ENCODE measurements at regions of chr6 and their contacts with region 1.

Region 1: DNA sequence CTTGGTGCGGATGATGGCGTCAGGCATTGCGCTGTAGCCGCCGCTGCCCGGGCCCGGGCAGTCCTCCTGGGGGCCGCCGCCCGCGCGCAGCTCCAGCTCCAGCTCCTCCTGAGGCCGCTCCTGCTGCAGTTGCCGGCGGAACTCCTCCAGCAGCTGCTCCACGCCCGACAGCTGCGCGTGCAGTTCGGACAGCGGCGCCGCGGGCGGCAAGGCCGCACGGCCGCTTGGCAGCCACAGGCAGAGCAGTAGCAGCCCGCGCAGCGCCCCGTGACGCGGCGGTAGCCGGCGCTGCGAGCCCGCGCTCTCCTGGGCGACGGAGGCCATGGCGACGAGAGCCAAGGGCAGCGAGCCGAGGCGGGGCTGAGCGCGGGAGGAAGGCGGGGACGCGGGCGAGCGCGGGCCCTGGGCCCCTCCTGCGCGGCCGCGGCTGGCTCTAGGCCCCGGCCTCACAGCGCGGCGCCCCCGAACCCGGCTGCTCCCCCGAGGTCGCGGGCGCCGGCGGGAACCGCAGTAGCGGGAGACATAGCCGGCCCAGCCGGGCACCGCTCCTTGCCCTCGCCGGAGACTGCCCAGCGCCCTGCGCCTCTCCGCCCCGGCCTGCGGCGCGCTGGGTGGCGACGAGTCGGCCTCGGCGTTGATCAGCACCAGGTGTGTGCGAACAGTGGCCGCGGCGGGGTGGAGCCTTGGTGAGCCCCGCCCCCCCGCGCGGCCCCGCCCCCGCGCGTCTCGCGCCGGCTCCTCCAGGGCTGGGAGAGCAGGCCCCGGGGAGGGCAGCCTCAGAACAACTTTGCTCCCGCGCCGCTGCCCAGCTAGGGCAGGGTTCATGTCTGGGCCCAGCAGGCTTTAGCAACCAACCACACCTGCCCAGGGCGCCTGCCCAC is at the start of gene LRP11:
- DNase-seq: peak; percentile 80
- H3K4me3 Mint-ChIP-seq: peak within 1 kb of the TSS; percentile 80
- H3K27ac Mint-ChIP-seq: no peak within 1 kb of the TSS
- H3K4me1 Mint-ChIP-seq: peaks cover 6% of the 10 kb centered on the region
- H3K27me3 Mint-ChIP-seq: peaks cover 12% of the 10 kb centered on the region
- total RNA-seq, gene LRP11: 4.6 to 4.7 TPM

Region 2: DNA sequence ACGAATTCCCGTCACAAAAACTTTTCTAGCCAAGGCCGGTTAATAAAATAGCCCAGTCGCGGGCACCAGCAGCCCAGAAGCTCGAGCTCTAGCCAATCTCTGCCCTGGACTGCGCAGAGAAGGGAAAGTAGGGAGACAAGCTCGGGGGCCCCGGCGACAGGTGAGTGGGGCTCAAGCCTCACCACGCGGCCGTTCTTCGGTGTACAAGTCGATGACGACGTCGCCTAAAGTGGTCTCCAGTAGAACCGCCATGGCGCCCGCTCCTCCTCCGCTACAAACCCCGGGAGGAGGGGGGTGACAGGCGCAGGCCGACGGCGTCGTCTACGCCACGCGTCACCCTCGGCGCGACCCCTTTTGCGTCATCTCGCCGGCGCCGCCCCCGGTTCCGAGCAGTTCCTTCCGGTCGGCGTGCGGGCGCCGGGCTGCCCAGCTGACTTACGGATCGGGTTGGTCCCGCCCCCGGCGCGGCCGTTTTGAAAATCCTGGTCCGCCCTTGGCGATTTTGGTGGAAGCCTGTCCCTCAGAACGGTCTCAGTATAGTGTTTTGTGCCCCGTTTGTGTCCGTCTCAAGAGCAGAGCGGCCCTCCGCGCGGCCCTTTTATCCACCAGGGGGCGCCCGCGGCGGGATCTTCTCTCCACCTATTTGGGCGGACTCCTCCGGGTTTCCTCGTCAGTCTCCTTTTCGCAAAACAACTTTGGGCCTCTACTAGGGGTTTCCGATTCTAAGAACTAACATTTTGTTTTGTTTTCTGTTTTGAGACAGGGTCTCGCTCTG is 318.0 kb before region 1 on chr6 and contains the start of gene PPIL4:
- CTCF ChIA-PET with region 1: no interaction called
- intact Hi-C with region 1: loop called (anchors 1 kb)
- DNase-seq: peak; percentile 97
- H3K4me3 Mint-ChIP-seq: peak within 1 kb of the TSS; percentile 96
- H3K27ac Mint-ChIP-seq: peak within 1 kb of the TSS; percentile 95
- H3K4me1 Mint-ChIP-seq: peaks cover 37% of the 10 kb centered on the region
- H3K27me3 Mint-ChIP-seq: no peaks in the 10 kb centered on the region
- total RNA-seq, gene PPIL4: 25.8 to 26.2 TPM

Region 3: DNA sequence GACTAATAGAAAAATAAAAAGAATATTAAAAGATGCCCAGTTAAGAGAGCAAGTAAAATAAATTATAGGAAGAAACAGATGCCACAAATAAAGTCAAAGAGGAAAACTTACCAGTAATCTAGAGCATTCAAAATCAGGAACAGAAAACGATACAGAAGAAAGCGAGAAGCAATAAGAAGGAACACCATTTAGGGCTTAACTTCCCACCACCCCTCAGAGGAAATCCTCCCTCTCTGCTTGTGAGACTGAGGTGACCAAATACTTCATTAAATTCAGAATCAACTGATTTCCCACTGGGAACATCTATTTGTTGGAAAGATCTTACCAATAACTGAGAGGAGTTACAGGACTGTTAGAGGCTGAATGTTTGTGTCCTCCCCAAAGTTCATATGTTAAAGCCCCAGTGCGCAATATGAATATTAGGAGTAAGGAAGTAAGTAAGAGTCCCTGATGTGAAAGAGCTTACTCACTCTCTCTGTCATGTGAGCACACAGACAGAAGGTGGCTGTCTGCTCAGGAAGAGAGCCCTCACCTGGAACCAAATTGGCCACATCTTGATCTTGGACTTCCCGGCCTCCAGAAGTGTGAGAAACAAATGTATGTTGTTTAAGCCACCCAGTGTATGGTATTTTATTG is 234.9 kb before region 1 on chr6:
- CTCF ChIA-PET with region 1: no interaction called
- intact Hi-C with region 1: no loop called
- DNase-seq: peak; percentile 17
- H3K4me3 Mint-ChIP-seq: no peak overlapping the region
- H3K27ac Mint-ChIP-seq: peak overlapping the region; percentile 19
- H3K4me1 Mint-ChIP-seq: peaks cover 8% of the 10 kb centered on the region
- H3K27me3 Mint-ChIP-seq: no peaks in the 10 kb centered on the region

Region 4: GRCh38 chr6:149723771-149724417 is 140.0 kb before region 1 on chr6:
- CTCF ChIA-PET with region 1: interaction called, 4 read pairs
- intact Hi-C with region 1: loop called (anchors 1 kb)
- DNase-seq: peak; percentile 56
- H3K4me3 Mint-ChIP-seq: no peak overlapping the region
- H3K27ac Mint-ChIP-seq: no peak overlapping the region
- H3K4me1 Mint-ChIP-seq: peaks cover 12% of the 10 kb centered on the region
- H3K27me3 Mint-ChIP-seq: no peaks in the 10 kb centered on the region

Region 5: GRCh38 chr6:149834513-149835481 is 29.1 kb before region 1 on chr6:
- CTCF ChIA-PET with region 1: interaction called, 11 read pairs
- intact Hi-C with region 1: loop called (anchors 1 kb)
- DNase-seq: peak; percentile 87
- H3K4me3 Mint-ChIP-seq: no peak overlapping the region
- H3K27ac Mint-ChIP-seq: no peak overlapping the region
- H3K4me1 Mint-ChIP-seq: peaks cover 2% of the 10 kb centered on the region
- H3K27me3 Mint-ChIP-seq: no peaks in the 10 kb centered on the region

Region 6: DNA sequence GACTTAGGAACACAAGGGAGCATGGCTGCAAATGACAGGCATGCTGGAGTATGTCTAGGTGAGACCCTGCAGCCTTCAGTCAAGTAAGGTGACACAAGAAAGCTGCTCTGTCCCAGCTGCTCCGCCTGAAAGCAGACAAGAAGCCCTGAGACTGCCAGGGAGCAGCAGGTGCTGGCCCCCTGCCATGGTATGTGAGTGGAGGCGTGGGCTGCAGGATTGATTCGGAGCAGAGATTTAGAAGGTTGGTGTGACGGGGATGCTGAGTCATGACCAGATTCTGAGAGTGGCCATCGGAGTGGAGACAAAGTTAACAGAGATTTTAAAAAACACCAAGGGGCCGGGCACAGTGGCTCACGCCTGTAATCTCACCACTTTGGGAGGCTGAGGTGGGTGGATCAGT is 17.6 kb before region 1 on chr6:
- CTCF ChIA-PET with region 1: interaction called, 12 read pairs
- intact Hi-C with region 1: no loop called
- DNase-seq: no peak
- H3K4me3 Mint-ChIP-seq: no peak overlapping the region
- H3K27ac Mint-ChIP-seq: no peak overlapping the region
- H3K4me1 Mint-ChIP-seq: peaks cover under 1% of the 10 kb centered on the region
- H3K27me3 Mint-ChIP-seq: no peaks in the 10 kb centered on the region

Region 7: DNA sequence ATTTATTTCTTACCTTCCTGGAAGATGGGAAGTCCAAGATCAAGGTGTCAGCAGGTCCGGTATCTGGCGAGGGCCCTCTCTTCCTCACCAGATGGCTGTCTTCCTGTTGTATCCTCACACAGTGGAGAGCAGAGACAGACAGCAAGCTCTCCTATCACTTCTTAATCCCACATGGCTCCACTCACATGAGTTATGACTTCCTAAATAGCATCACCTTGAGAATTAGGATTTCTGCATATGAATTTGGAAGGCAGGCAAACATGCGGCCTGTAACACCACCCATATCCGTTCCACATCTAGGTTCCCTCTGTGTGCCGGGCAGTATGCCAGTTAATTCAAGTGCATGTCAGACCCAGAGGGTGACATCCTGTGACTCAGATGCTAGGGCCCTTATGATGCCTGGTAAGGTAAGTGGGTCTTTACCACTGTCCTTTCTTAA is 31.9 kb after region 1 on chr6:
- CTCF ChIA-PET with region 1: no interaction called
- intact Hi-C with region 1: loop called (anchors 1 kb)
- DNase-seq: peak; percentile 76
- H3K4me3 Mint-ChIP-seq: no peak overlapping the region
- H3K27ac Mint-ChIP-seq: no peak overlapping the region
- H3K4me1 Mint-ChIP-seq: peaks cover 12% of the 10 kb centered on the region
- H3K27me3 Mint-ChIP-seq: peaks cover 3% of the 10 kb centered on the region

Region 8: DNA sequence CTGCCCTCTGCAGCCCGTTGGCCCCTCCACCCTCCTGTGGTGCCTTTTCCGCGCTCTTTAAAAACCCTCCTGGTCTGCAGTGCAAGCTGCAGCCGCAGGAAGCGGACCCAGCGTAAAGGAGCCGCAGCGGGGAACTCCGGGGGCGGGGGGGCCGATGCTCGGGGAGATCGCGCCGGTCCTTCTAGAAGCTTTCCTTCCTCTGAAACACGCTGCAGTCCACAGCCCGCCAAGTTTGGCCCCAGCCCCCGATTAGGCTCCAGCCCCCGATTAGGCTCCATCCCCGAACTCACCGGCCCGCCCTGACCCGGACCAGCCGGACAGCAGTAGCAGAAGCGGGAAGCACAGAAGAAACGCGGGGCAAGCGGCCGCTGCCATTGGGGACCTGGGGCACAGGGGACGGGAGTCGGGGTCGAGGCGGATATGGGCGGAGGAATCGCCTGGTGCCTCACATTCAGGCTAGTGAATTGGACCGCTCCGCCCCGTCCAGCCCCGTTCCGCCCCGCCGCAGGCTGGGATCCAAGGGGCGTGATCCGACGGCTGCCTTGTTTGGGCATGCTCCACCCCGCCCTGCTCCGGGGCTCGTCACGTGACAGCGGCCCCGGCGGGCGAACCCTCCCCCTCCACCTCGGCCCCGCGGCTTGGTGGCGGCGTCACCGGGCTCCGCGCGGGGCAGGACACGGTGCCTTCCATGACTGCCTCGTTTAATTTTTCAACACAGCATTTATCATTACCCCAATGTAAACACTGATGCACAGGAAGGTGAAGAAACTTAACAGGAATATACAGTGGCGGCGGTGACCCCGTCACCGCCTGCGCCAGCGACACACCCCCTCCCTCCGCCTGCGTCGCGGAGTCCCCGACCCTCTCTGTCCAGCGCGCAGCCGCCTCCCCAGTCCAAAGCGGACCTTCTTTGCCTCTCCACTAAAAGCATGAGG is 141.1 kb after region 1 on chr6:
- CTCF ChIA-PET with region 1: no interaction called
- intact Hi-C with region 1: loop called (anchors 5 kb)
- DNase-seq: peak; percentile 94
- H3K4me3 Mint-ChIP-seq: peak overlapping the region; percentile 86
- H3K27ac Mint-ChIP-seq: no peak overlapping the region
- H3K4me1 Mint-ChIP-seq: peaks cover 51% of the 10 kb centered on the region
- H3K27me3 Mint-ChIP-seq: peaks cover 26% of the 10 kb centered on the region

Region 9: DNA sequence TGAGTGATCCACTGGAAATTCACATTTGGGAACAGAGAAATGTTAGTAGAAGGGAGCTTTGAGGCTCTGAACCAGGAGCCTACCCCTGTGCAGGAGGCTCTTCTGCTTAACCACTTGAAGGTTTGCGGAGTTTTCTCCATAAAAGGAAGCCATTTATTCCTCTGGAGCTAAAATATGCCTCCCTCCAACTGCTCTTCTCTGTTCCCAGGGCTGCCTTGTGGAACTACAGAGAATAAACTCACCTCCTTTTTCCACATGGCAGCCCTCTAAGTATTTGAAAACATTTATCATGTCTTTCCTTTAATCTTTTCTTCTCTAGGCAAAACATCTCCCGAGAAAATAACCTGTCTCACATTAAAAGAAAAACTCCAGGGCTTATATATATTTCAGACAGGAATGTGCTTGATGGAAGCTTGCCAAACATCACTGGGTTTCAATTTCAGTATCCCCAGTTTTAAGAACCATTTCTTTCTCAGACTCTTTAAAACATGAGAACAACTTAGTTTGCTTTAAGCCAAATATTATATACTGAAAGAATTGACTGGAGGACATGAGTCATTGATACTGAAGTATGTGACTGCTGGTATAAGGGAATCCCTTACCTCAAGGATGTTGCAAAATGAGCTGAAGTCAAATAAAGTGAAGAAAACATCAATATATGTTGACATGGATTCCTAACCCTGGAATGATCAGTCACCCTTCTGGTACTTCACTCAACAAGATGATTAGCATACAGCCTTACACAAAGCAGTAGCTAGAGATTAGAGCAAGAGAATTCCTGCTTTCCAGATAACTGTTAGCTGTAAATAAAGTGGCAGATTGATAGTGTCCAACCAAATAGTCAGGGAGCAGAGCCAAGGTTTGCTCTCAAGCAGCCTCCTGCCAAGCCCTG is 1453.4 kb after region 1 on chr6:
- CTCF ChIA-PET with region 1: no interaction called
- intact Hi-C with region 1: no loop called
- DNase-seq: no peak
- H3K4me3 Mint-ChIP-seq: no peak overlapping the region
- H3K27ac Mint-ChIP-seq: no peak overlapping the region
- H3K4me1 Mint-ChIP-seq: no peaks in the 10 kb centered on the region
- H3K27me3 Mint-ChIP-seq: peaks cover 5% of the 10 kb centered on the region

Measured in activated naive CD4-positive, alpha-beta T cell treated with anti-CD3 and anti-CD28 coated beads for 36 hours (primary cell).